ENCODE measurements at regions of chr19 and their contacts with region 1.

Region 1: DNA sequence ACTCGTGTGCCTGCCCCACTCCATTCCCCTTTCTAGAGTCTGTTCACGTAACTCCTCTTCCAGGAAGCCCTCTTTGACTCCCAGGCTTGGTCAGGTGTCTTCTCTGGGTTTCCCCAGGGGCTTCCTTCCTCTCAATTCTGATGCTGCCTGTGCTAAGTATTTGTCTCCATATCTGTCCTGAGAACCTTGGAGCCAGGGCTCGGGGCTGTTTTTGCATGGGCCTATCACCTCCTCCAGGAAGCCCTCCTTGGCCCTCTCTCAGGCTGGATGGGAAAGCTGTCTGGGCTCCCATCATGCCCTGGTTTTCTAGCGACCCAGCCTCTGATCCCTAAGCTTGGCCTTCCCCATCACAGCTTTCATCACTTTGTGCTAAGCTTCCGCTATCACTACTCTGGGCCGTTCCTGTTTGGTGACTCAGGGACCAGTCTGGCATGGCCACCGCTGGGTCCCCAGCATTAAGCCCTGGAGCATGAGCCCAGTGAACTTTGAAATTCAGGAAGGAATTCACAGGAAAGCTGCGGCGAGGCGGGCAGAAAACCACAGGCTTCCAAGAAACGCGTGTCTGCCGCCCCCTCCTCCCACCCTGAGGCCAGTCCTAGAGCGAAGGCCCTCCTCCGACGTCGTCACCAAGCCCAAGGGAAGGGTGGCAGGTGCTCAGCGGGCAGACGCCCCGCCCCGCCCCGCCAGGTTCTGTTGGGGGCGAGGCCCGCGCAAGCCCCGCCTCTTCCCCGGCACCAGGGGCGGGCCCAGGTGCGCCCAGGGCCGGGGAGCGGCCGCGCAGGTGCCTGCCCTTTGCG is 486 bp upstream of the SPINT2 start:
- DNase-seq: peak; percentile 91
- H3K4me3 Mint-ChIP-seq: peak overlapping the region; percentile 78
- H3K27ac Mint-ChIP-seq: peak overlapping the region; percentile 82
- H3K4me1 Mint-ChIP-seq: peaks cover 33% of the 10 kb centered on the region
- H3K27me3 Mint-ChIP-seq: no peaks in the 10 kb centered on the region
- CTCF ChIP-seq: no peak

Region 2: DNA sequence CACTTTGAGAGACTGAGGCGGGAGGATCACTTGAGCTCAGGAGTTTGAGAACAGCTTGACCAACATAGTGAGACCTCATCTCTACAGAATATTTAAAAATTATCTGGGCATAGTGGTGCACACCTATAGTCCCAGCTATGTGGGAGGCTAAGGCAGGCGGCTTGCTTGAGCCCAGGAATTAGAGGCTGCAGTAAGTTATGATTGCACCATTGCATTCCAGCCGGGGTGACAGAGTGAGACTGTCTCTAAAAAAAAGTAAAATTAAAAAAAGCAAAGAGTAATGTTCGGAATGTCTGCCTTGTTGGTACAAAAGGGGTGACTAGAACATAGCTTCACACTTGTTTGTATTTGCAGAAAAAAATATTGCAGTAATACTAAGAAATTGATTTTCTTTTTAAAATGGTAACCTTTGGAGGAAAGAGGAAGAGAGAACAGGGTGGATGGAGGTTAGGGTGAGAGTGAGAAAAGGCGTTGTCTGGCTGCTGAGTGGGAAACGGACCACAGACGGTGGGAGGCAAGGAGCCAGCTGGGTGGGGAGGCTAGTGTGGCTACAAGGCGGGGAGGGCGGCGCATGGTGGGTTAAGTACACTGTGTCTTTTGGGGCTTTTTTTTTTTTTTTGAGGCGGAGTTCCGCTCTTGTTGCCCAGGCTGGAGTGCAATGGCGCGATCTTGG is 17.9 kb before region 1 on chr19:
- CTCF ChIA-PET with region 1: interaction called, 28 read pairs
- POLR2A ChIA-PET with region 1: interaction called, 36 read pairs
- intact Hi-C with region 1: loop called (anchors 1 kb)
- DNase-seq: no peak
- H3K4me3 Mint-ChIP-seq: no peak overlapping the region
- H3K27ac Mint-ChIP-seq: no peak overlapping the region
- H3K4me1 Mint-ChIP-seq: peaks cover 16% of the 10 kb centered on the region
- H3K27me3 Mint-ChIP-seq: no peaks in the 10 kb centered on the region
- CTCF ChIP-seq: no peak

Region 3: GRCh38 chr19:38277969-38278680 is 14.2 kb after region 1 on chr19:
- CTCF ChIA-PET with region 1: no interaction called
- POLR2A ChIA-PET with region 1: interaction called, 82 read pairs
- intact Hi-C with region 1: no loop called
- DNase-seq: no peak
- H3K4me3 Mint-ChIP-seq: no peak overlapping the region
- H3K27ac Mint-ChIP-seq: peak overlapping the region; percentile 27
- H3K4me1 Mint-ChIP-seq: peaks cover 11% of the 10 kb centered on the region
- H3K27me3 Mint-ChIP-seq: no peaks in the 10 kb centered on the region
- CTCF ChIP-seq: no peak

Region 4: DNA sequence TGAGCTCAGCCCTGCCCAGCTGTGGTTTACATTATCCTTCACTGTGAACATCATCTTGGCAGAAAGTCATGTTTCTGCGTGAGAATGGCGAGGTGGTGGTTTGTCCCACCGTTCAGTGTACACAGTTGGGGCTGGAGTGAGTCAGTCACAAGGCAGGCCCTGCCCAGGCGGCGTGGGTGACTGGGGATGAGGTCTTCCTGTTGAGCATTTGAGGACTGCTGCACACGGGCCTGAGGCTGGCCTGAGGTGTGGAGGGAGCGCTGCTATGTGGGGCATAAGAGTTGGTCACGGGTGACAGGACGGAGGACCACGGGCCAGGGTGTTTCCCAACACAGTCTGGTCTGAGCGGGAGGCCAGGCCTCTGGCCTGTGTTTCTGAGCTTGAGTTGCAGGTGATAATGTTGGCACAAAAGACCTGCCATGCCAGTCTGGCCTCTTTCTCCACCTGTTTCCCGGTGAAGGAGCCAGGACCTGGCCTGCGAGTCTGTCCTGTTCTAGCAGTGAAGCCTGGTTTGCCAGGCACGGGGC is 26.8 kb after region 1 on chr19:
- CTCF ChIA-PET with region 1: no interaction called
- POLR2A ChIA-PET with region 1: interaction called, 82 read pairs
- intact Hi-C with region 1: no loop called
- DNase-seq: peak; percentile 88
- H3K4me3 Mint-ChIP-seq: peak overlapping the region; percentile 3
- H3K27ac Mint-ChIP-seq: peak overlapping the region; percentile 11
- H3K4me1 Mint-ChIP-seq: peaks cover 13% of the 10 kb centered on the region
- H3K27me3 Mint-ChIP-seq: no peaks in the 10 kb centered on the region
- CTCF ChIP-seq: no peak

Region 5: GRCh38 chr19:38315657-38316476 is 52.0 kb after region 1 on chr19 and contains the start of gene YIF1B:
- CTCF ChIA-PET with region 1: interaction called, 3 read pairs
- POLR2A ChIA-PET with region 1: interaction called, 45 read pairs
- intact Hi-C with region 1: no loop called
- DNase-seq: peak; percentile 98
- H3K4me3 Mint-ChIP-seq: peak within 1 kb of the TSS; percentile 82
- H3K27ac Mint-ChIP-seq: peak within 1 kb of the TSS; percentile 88
- H3K4me1 Mint-ChIP-seq: peaks cover 15% of the 10 kb centered on the region
- H3K27me3 Mint-ChIP-seq: no peaks in the 10 kb centered on the region
- CTCF ChIP-seq: no peak
- total RNA-seq, gene YIF1B: 49.2 and 60.3 TPM in 2 replicates

Region 6: GRCh38 chr19:38374429-38375176 is 110.7 kb after region 1 on chr19 and contains the start of gene PSMD8:
- CTCF ChIA-PET with region 1: interaction called, 5 read pairs
- POLR2A ChIA-PET with region 1: interaction called, 49 read pairs
- intact Hi-C with region 1: no loop called
- DNase-seq: peak; percentile 100
- H3K4me3 Mint-ChIP-seq: peak within 1 kb of the TSS; percentile 84
- H3K27ac Mint-ChIP-seq: peak within 1 kb of the TSS; percentile 98
- H3K4me1 Mint-ChIP-seq: peaks cover 19% of the 10 kb centered on the region
- H3K27me3 Mint-ChIP-seq: no peaks in the 10 kb centered on the region
- CTCF ChIP-seq: no peak
- total RNA-seq, gene PSMD8: 289 and 311 TPM in 2 replicates

Region 7: GRCh38 chr19:38478273-38478967 is 214.5 kb after region 1 on chr19:
- CTCF ChIA-PET with region 1: no interaction called
- POLR2A ChIA-PET with region 1: no interaction called
- intact Hi-C with region 1: no loop called
- DNase-seq: peak; percentile 28
- H3K4me3 Mint-ChIP-seq: no peak overlapping the region
- H3K27ac Mint-ChIP-seq: no peak overlapping the region
- H3K4me1 Mint-ChIP-seq: no peaks in the 10 kb centered on the region
- H3K27me3 Mint-ChIP-seq: peaks cover 16% of the 10 kb centered on the region
- CTCF ChIP-seq: no peak